ENCODE measurements at regions of chr17 and their contacts with region 1.

Region 1: GRCh38 chr17:7897773-7898172 is 9.2 kb downstream of the CHD3 start:
- DNase-seq: peak in 1 of 3 donors; percentile 53
- ATAC-seq: peak; percentile 88 to 98 (median 94)
- H3K4me3 ChIP-seq: no peak overlapping the region
- H3K27ac ChIP-seq: no peak overlapping the region
- H3K4me1 ChIP-seq: peaks cover 0 to 6% (median 0%) of the 10 kb centered on the region in 4 donors
- H3K27me3 ChIP-seq: no peaks in the 10 kb centered on the region
- CTCF ChIP-seq: peak; percentile 65 to 90 (median 70)
- POLR2A ChIP-seq: no peak

Region 2: GRCh38 chr17:7862692-7863437 is 34.9 kb before region 1 on chr17:
- intact Hi-C with region 1: loop called in 1 of 2 experiments (anchors 5 kb)
- DNase-seq: no peak
- ATAC-seq: peak in 2 of 4 donors; percentile 16 to 25
- H3K4me3 ChIP-seq: no peak overlapping the region
- H3K27ac ChIP-seq: no peak overlapping the region
- H3K4me1 ChIP-seq: peaks cover 0 to 15% (median 7%) of the 10 kb centered on the region in 4 donors
- H3K27me3 ChIP-seq: no peaks in the 10 kb centered on the region
- CTCF ChIP-seq: peak; percentile 65 to 83 (median 81)
- POLR2A ChIP-seq: no peak

Region 3: DNA sequence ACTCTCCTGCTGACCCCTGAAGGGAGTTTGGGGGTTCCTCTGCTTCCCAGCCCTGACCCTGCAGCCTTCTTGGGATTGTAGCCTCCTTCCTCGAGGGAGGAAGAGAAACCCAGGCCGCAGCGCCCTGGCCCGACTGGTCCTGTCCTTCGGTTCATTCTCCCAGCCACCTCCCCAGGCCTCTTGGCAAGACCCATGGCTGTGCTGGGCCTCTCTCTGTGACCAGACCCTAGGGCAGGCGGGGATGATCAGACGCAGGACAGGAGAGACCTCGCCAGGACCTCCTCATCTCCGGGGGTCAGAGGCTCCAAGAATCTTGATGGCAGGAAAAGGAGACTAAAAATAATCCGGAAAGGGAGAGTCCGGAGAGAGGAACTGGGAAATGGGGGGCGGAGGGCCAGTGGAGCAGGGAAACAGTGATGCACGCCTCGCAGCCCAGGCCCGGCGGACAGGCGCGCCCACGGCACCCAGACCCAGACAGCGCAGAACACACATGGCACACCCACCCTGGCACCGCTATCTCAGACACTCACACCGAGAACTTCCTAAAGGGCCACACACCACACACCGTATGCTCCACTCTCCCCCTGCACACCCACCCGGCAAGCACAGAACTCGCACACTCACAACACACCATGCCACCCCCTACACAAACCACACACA is 413.5 kb after region 1 on chr17:
- intact Hi-C with region 1: no loop called
- DNase-seq: no peak
- ATAC-seq: peak; percentile 31 to 55 (median 52)
- H3K4me3 ChIP-seq: peak overlapping the region in 1 of 3 donors; percentile 19
- H3K27ac ChIP-seq: no peak overlapping the region
- H3K4me1 ChIP-seq: no peaks in the 10 kb centered on the region
- H3K27me3 ChIP-seq: no peaks in the 10 kb centered on the region
- CTCF ChIP-seq: no peak
- POLR2A ChIP-seq: no peak

Measured in right lobe of liver (tissue), 6 donors.